Esophagus muscularis mucosa (tissue), 4 donors: ENCODE measurements at regions of chr22 and their contacts with region 1.

Region 1: DNA sequence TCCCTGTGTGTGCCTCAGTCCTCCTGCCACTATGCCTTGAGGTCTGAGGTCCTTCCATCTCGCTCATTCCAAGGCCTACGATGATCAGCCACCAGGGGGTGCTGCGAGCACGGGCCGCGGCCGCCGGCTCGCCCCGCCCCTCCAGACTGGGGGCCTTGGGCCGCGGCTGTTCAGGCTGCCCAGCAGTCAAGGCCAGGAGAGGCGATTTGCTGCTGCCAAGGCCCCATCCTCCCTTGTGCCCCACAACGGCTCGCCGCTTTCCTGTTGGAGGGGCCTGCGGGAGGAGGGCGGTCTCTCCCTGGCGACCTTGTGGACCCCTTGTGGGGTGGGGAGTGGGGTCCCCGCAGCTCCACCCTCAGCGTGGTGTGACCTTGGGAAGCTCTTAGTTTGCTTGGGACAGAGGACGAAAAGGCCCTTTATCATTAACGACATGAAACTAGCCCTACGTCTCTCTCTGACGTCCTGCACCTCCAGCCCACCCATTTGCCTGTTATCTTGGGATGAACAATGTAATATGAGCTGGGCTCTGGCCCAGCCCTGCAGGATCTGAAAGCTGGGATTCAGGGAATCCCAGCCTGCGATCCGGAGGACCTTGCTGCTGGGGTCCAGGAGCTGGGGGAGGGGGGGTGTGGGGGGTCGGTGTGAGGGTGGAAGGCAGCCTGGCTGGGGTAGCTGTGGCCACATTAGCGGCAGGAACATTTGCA is 5.3 kb upstream of the GALR3 start:
- DNase-seq: peak; percentile 96
- H3K4me3 ChIP-seq: peak overlapping the region; percentile 40 to 59 (median 51)
- H3K27ac ChIP-seq: peak overlapping the region; percentile 44 to 70 (median 50)
- H3K4me1 ChIP-seq: peaks cover 17 to 21% (median 20%) of the 10 kb centered on the region in 4 donors
- H3K27me3 ChIP-seq: peaks cover 0 to 41% (median 0%) of the 10 kb centered on the region in 4 donors
- CTCF ChIP-seq: peak; percentile 96 to 98 (median 97)
- EP300 ChIP-seq: no peak
- POLR2A ChIP-seq: no peak

Region 2: DNA sequence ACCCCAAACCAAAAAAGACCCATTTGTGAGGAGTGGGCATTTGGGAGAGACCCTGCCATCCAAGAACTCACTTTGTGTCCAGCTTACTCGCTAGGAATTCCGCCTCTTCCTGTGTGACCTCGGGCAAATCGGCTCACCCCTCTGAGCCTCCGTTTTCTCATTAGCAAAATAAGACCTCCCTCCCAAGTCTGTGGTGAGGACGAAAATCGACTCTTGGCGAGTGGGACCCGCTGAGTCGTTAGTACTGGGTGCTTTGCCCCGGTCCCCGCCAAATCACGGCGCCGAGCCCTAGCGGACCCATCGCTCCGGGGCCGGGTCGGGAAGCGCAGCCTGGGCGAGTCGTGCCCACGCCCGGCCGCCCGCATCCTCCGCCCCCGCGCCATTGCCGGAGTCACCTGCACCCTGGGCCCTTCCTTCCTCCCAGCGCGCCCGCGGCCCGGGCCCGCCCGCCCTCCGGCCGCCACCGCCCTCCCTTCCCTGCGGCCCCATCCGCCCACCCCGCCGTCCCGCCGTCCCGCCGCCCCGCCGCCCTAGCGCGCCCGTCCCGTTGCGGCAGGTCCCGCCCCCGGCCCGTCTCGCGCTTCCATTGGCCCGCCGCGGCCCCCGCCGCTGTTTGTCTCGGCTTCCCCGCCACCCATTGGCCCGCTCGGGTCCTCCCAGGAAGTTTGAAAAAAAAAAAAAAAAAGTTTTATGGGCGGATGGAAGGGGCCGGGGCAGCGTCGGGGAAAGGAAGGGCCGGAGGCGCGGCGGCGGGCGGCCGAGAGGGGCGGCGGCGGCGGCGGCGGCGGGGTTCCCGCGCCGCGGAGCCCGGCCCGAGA is 72.1 kb before region 1 on chr22:
- intact Hi-C with region 1: no loop called
- DNase-seq: peak; percentile 96
- H3K4me3 ChIP-seq: peak overlapping the region; percentile 76 to 98 (median 88)
- H3K27ac ChIP-seq: peak overlapping the region; percentile 90 to 96 (median 91)
- H3K4me1 ChIP-seq: peaks cover 61 to 89% (median 89%) of the 10 kb centered on the region in 4 donors
- H3K27me3 ChIP-seq: no peaks in the 10 kb centered on the region
- CTCF ChIP-seq: no peak
- EP300 ChIP-seq: no peak
- POLR2A ChIP-seq: no peak

Region 3: DNA sequence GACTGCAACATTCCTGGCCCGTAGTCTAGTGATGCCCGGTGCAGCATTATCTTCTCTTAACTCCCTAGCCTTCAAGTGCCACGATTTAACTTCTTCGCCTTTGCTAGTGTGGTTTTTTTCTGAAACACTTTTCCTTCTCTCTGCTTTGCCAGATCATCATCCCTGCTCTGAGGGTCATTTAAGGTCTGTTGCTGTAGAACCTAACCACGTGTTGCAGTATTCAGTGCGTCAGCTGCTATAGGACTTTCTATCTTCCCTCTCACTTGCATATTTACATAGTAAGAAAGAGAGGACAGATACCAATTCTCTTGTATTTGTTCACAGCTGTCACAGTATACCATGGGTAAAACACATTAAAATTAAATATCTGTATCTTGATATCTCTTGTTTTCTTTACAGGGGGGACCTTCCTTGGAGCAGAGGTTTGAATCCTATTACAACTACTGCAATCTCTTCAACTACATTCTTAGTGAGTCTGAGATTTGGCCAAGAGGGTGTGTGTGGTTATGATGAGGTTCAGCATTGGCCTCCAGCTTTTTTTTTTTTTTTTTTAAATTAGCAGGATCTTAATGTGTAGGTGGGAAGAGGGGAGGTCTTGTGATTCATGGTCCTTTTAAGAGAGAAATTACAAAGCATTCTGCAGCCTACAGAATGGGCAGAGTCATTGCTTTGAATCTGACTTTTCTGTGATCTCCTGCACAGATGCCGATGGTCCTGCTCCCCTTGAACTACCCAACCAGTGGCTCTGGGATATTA is 44.9 kb after region 1 on chr22:
- intact Hi-C with region 1: loop called (anchors 1 kb)
- DNase-seq: no peak
- H3K4me3 ChIP-seq: no peak overlapping the region
- H3K27ac ChIP-seq: peak overlapping the region in 2 of 4 donors; percentile 22 to 32
- H3K4me1 ChIP-seq: peaks cover 6 to 19% (median 15%) of the 10 kb centered on the region in 4 donors
- H3K27me3 ChIP-seq: no peaks in the 10 kb centered on the region
- CTCF ChIP-seq: no peak
- EP300 ChIP-seq: no peak
- POLR2A ChIP-seq: no peak

Region 4: DNA sequence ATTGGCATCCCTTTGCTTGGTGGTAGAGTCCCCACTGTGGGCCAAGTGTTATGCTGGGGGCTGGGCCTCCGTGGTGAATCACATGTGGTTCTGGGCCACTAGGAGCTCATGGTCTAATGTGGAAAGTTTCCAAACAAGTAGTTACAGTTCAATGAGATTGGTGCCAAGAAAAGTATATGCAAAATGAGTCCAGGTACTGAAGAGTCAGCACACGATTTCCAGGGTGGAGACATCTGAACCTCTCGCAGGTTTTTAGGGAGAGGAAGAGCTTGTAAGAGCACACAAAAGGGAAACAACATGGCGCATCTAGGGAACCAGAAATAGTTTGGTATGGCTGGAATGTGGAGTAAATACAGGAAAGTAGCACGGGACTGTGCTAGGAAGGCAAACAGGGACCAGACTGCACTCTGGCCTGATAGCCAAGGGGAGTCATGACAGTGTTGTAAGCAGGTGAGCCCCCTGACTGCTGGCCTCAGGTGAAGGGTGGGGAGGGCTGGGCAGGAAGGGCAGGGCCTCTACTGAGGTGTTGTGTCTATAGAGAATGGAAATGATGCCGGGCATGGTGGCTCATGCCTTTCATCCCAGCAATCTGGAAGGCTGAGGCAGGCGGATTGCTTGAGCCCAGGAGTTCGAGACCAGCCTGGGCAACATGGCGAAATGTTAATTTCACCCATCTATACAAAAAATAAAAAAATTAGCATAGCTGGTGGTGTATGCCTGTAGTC is 148.2 kb after region 1 on chr22:
- intact Hi-C with region 1: loop called (anchors 5 kb)
- DNase-seq: no peak
- H3K4me3 ChIP-seq: no peak overlapping the region
- H3K27ac ChIP-seq: no peak overlapping the region
- H3K4me1 ChIP-seq: peaks cover 15 to 24% (median 20%) of the 10 kb centered on the region in 4 donors
- H3K27me3 ChIP-seq: no peaks in the 10 kb centered on the region
- CTCF ChIP-seq: no peak
- EP300 ChIP-seq: no peak
- POLR2A ChIP-seq: no peak